PC-9 (cell line): ENCODE measurements at regions of chr7 and their contacts with region 1.

Region 1: DNA sequence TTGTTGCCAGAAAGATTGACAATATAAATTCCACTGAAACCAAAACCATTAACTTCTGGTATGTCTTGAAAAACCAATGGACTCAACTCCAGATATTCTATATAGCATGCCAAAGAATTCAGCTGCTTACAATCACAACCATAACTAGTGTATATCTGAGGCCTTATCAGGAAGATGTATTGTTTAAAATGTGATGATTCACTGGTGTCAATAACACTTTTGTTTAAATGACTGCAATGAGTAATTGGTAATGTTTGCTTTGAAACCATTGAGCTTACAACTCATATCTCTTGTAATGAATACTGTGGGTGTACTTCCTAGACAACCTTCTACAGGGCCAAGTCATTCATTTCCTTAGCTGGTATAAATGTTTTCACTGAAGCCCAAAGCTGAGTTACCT is 727.9 kb upstream of the KCND2 start:
- DNase-seq: peak in 1 of 2 experiments; percentile 86
- H3K4me3 ChIP-seq: no peak overlapping the region
- H3K27ac ChIP-seq: no peak overlapping the region
- H3K4me1 ChIP-seq: 0 out of 2 replicates have a peak, but pooled peaks cover 4% of the 10 kb centered on the region
- H3K27me3 ChIP-seq: peaks cover 17% of the 10 kb centered on the region
- CTCF ChIP-seq: no peak

Region 2: DNA sequence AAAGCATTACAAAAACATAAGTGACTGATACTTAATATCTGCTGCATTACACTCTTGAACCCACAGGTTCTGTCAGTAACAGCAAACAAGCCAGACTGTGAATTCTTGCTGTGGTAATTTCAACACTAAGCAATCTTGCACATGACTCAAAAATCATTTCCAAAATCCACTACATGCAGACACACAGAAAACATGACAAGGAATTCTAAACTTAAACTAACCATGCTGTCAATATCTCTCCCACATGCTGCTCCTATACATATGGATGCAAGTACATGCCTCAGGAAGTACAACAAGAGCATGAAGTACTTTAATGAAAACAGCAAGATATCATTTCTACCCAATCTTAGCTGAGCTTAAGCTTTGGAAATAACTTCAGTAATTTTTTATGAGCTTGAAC is 162.4 kb before region 1 on chr7:
- CTCF ChIA-PET with region 1: no interaction called
- POLR2A ChIA-PET with region 1: no interaction called
- intact Hi-C with region 1: no loop called
- DNase-seq: no peak
- H3K4me3 ChIP-seq: no peak overlapping the region
- H3K27ac ChIP-seq: no peak overlapping the region
- H3K4me1 ChIP-seq: no peaks in the 10 kb centered on the region
- H3K27me3 ChIP-seq: no peaks in the 10 kb centered on the region
- CTCF ChIP-seq: no peak

Region 3: GRCh38 chr7:120583899-120584586 is 1038.9 kb after region 1 on chr7:
- CTCF ChIA-PET with region 1: no interaction called
- POLR2A ChIA-PET with region 1: no interaction called
- intact Hi-C with region 1: loop called (anchors 5 kb)
- DNase-seq: peak; percentile 65 to 69
- H3K4me3 ChIP-seq: no peak overlapping the region
- H3K27ac ChIP-seq: no peak overlapping the region
- H3K4me1 ChIP-seq: peaks cover 12% of the 10 kb centered on the region
- H3K27me3 ChIP-seq: no peaks in the 10 kb centered on the region
- CTCF ChIP-seq: no peak